Gastrocnemius medialis (tissue), 4 donors: ENCODE measurements at regions of chr11 and their contacts with region 1.

Region 1: DNA sequence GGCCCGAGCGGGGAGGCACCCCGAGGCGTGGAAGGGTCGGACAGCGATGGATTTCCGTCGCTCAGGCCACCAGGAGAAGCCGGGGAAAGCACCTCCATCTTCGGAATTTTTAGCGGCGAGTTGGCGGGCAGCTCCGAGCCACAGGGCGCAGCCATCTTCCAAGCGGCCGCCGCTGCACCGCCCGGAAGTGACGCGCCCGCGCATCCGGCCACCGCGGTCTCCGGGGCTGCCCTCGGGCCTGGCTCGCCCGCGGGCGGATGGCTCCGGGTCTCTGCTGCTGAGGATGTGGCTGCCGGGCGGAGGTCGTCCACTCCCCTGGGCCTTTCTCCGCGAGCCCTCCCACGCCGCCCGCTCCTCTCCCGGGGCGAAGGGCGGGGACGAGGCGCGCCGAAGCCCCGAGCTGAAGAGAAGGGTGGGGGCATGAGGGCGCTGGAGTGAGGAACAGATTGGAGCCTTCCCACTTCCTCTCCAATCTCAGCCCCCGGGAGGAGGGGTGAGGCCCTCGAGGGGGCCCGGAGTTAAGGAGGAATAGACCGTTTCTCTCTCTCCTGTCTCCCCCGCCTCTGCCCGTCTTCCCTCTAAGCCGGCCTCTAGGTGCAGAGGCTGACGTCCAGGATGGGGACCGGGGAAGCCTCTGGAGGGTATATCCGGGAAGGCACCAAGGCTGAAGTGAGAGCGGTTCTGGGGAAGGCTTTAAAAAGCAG is at the start of gene MSANTD2:
- DNase-seq: peak; percentile 55 to 60
- ATAC-seq: peak; percentile 94
- H3K4me3 ChIP-seq: peak within 1 kb of the TSS; percentile 58 to 91 (median 86)
- H3K27ac ChIP-seq: peak within 1 kb of the TSS; percentile 87 to 99 (median 94)
- H3K4me1 ChIP-seq: peaks cover 26 to 28% of the 10 kb centered on the region in 2 donors
- H3K27me3 ChIP-seq: no peaks in the 10 kb centered on the region
- CTCF ChIP-seq: no peak
- POLR2A ChIP-seq: peak; percentile 76 to 79
- total RNA-seq, gene MSANTD2: 3.3 to 5.1 (median 3.8) TPM

Region 2: GRCh38 chr11:124543145-124543544 is 257.2 kb before region 1 on chr11:
- in situ Hi-C with region 1: no loop called
- intact Hi-C with region 1: no loop called
- DNase-seq: no peak
- ATAC-seq: no peak
- H3K4me3 ChIP-seq: no peak overlapping the region
- H3K27ac ChIP-seq: no peak overlapping the region
- H3K4me1 ChIP-seq: no peaks in the 10 kb centered on the region
- H3K27me3 ChIP-seq: no peaks in the 10 kb centered on the region
- CTCF ChIP-seq: no peak
- POLR2A ChIP-seq: no peak

Region 3: DNA sequence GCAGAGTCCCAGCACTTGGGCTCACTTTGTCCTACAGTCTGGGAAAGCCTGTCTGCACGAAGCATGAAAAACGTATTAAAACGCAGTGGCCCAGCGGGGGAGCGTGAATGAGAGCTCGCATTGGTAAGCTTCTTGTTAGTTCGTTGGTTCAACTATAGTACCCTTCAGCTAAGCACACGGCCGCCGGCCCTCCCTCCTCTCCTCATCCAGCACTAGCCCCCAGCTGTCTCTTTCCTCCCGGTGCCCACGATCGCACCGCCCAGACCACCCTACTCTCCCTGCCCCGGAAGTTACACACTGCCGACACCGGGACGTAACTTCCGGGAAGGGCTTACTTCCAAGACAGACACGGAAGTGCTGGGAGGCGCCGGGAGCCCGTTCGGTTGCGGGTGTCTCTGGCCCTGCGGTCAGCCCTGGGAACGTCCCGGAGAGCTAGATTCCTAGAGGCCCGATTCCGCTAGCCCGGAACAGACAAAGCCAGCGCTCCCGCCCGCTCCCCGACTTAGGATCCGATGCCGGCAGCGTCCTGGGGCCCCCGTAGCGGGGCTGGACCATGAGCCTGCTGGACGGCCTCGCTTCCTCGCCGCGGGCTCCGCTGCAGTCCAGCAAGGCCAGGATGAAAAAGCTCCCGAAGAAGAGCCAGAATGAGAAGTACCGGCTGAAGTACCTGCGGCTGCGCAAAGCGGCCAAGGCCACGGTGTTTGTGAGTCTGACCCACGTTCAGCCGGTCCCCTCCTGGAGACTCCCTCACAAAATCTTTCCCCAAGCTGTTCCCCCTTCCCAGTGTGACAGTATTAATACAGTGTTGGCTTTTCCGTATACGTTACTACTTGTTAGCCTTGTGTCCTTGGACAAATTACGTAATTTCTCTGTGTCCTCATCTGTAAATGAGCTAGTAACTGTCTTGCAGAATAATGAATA is 177.6 kb before region 1 on chr11 and contains the start of gene TBRG1:
- in situ Hi-C with region 1: no loop called
- intact Hi-C with region 1: loop called (anchors 5 kb)
- DNase-seq: peak; percentile 80 to 83
- ATAC-seq: peak; percentile 98
- H3K4me3 ChIP-seq: peak within 1 kb of the TSS; percentile 74 to 95 (median 86)
- H3K27ac ChIP-seq: peak within 1 kb of the TSS; percentile 85 to 95 (median 93)
- H3K4me1 ChIP-seq: peaks cover 29 to 32% of the 10 kb centered on the region in 2 donors
- H3K27me3 ChIP-seq: no peaks in the 10 kb centered on the region
- CTCF ChIP-seq: peak in 1 of 5 experiments; percentile 18
- POLR2A ChIP-seq: peak; percentile 85 to 86
- total RNA-seq, gene TBRG1: 20.8 to 42.3 (median 25.6) TPM

Region 4: GRCh38 chr11:124763156-124763947 is 37.0 kb before region 1 on chr11:
- in situ Hi-C with region 1: no loop called
- intact Hi-C with region 1: loop called (anchors 5 kb)
- DNase-seq: peak in 1 of 2 donors; percentile 58
- ATAC-seq: peak; percentile 39 to 52
- H3K4me3 ChIP-seq: peak overlapping the region; percentile 52 to 67 (median 60)
- H3K27ac ChIP-seq: peak overlapping the region in 3 of 4 donors; percentile 76 to 87 (median 87)
- H3K4me1 ChIP-seq: peaks cover 9 to 24% of the 10 kb centered on the region in 2 donors
- H3K27me3 ChIP-seq: peaks cover 32 to 40% (median 35%) of the 10 kb centered on the region in 3 donors
- CTCF ChIP-seq: peak; percentile 67 to 82 (median 71)
- POLR2A ChIP-seq: no peak

Region 5: GRCh38 chr11:124837491-124837856 is 37.1 kb after region 1 on chr11:
- in situ Hi-C with region 1: no loop called
- intact Hi-C with region 1: loop called (anchors 2 kb)
- DNase-seq: no peak
- ATAC-seq: peak in 1 of 2 donors; percentile 52
- H3K4me3 ChIP-seq: no peak overlapping the region
- H3K27ac ChIP-seq: no peak overlapping the region
- H3K4me1 ChIP-seq: peaks cover 9 to 16% of the 10 kb centered on the region in 2 donors
- H3K27me3 ChIP-seq: peaks cover 44 to 49% (median 44%) of the 10 kb centered on the region in 3 donors
- CTCF ChIP-seq: no peak
- POLR2A ChIP-seq: no peak